Tibial artery (tissue), 4 donors: ENCODE measurements at regions of chr11 and their contacts with region 1.

Region 1: DNA sequence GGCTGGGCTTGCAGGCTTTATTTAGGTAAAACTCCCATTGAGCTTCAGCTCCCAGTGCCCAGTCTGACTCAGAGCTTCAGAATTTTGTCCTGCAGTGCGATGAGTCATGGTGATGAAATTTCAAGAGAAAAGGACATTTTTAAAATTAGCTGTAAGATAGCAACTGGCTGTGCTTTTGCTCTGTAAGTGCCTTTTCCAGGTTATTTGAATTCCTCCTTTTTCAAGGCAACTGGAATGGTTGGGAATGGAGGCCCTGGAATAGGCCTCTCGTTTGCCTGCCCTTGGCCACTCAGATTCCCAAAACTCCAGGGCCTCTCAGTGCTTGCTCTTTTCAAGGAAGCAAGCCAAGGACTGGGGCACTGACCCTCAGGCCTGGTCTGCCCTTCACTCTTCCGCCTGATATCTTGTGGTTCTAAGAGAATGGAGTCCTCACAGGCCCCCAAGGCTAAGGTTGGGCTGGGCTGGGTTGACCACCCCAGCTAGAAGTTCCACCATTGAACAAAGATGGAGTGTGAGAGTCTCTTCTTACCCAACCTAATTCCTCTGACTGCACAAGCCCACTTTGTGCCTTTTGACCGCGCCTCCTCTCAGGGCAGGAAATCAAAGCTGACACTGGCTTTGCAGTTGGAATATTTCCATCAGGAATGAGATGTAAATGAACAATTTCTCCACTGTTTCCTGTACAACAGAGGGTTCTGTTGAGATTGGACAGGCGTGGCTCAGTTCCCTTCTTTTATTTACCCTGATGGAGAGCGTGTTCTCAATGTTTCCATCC is 59.4 kb upstream of the PRSS23 start:
- DNase-seq: peak; percentile 70 to 86
- H3K4me3 ChIP-seq: no peak overlapping the region
- H3K27ac ChIP-seq: peak overlapping the region; percentile 86
- H3K4me1 ChIP-seq: peaks cover 0 to 74% (median 52%) of the 10 kb centered on the region in 4 donors
- H3K27me3 ChIP-seq: no peaks in the 10 kb centered on the region
- CTCF ChIP-seq: no peak

Region 2: GRCh38 chr11:86671682-86672621 is 68.9 kb before region 1 on chr11 and contains the start of gene ME3:
- intact Hi-C with region 1: loop called (anchors 10 kb)
- DNase-seq: peak; percentile 75 to 89
- H3K4me3 ChIP-seq: peak within 1 kb of the TSS; percentile 87 to 93
- H3K27ac ChIP-seq: peak within 1 kb of the TSS; percentile 98 to 100
- H3K4me1 ChIP-seq: peaks cover 0 to 67% (median 45%) of the 10 kb centered on the region in 4 donors
- H3K27me3 ChIP-seq: no peaks in the 10 kb centered on the region
- CTCF ChIP-seq: no peak